Head of caudate nucleus (tissue), 42 donors: ENCODE measurements at regions of chr18 and their contacts with region 1.

Region 1: DNA sequence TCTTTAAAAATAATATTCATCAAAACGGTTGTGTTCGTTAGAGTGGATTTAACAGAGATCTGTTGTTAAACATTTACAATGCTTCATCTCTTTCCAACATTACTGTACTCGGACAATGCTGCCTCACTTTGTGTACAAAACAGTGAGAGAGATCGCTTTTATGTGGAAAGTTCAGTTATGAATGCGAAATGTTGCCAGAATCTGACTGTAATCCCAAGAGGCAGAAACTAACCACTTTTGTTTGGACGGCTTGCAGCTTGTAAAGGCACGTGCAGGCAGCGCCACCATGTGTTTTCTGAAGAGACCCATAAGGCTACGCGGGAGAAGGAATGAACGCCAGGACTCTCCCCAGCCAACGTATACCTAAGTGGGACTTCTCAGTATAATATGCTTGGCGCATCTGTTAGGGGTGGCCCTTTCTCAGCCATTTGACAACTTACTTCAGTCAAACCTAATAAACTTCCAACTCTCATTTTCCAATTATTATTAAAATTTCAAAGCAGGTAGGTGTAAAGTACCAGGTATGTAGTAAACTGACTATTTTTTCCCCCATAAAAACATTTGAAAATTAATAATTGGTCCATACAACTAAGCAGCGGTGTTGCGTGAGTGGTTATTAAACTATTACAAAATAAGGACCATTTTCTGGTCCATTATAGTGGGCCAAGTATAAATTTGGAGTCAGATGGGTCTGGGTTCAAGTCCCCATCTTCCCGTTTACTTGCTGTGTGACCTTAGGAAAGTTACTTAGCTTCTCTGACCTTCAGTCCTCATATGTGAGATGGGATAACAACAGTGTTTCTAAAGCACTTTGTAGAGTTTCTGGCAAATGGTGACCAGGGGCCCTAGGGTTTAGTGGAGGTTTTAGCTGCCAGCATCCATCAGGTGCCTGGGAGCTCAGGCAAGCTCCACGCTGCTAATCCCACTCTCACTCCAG is 5.6 kb upstream of the NAPG start:
- DNase-seq: peak; percentile 63 to 92 (median 84)

Region 2: DNA sequence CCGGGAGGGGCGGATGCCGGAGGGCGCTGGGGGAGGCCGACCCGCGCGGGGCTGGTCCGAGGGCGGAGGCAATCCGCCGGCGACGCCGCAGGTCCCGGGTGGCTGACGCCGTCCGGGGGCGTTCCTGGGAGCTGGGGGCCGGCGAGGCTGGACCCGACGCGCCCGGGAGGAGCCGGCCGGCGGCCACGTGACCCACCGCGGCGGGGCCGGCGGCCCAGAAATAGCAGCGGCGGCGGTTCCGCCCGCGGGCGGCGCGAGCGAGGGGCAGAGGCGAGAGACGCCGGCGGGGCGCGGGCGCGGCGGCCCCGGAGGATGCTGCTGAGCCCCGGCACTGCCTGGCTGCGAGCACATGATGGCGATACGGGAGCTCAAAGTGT is 812.2 kb before region 1 on chr18 and contains the start of gene RAB31:
- intact Hi-C with region 1: no loop called
- DNase-seq: peak; percentile 9 to 90 (median 76)

Region 3: GRCh38 chr18:9849407-9850281 is 670.6 kb before region 1 on chr18:
- intact Hi-C with region 1: no loop called
- DNase-seq: peak in 18 of 42 donors; percentile 13 to 58 (median 33)

Region 4: GRCh38 chr18:9968081-9968848 is 552.0 kb before region 1 on chr18:
- intact Hi-C with region 1: loop called (anchors 2 kb)
- DNase-seq: no peak

Region 5: GRCh38 chr18:10401521-10401920 is 118.7 kb before region 1 on chr18:
- intact Hi-C with region 1: loop called (anchors 5 kb)
- DNase-seq: peak in 2 of 42 donors; percentile 18 to 63

Region 6: GRCh38 chr18:10453806-10454673 is 66.2 kb before region 1 on chr18 and contains the start of gene APCDD1:
- intact Hi-C with region 1: loop called (anchors 10 kb)
- DNase-seq: peak; percentile 40 to 92 (median 84)

Region 7: DNA sequence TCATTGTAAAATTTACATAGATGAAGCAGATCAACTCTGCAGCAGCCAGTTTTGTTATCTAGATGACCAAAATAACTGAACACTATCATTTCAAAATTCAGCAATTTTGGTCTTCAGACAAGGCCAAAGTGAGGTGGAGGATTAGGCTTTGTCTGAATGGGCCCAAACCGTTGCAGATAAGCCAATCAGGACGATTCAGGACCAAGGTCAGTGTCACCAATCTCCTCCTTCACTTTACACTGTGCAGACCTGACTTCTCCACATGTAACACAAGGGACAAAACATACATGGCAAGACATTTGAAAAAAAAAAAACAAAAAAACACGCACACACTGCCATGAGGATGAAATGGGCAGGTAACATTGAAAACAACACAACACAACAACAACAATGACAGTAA is 216.7 kb after region 1 on chr18:
- intact Hi-C with region 1: no loop called
- DNase-seq: no peak